Sigmoid colon (tissue), 7 donors: ENCODE measurements at regions of chr12 and their contacts with region 1.

Region 1: DNA sequence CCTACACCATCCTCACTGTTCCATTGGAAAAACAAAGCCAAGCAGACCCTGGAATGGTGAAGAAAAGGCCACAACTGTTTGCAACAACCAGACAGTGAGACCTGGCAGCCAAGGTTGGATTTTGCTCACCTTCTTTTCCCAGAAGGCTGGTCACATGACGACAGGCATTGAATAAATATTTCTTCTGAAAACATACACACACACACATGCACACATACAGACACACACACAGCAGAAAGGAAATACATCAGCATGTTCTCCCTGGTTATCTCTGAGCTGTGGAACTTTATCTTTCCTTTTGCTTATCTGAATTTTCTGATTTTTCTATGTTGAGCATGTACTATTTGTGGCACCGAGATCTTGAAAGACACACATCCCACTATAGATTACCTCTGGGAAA is 38.0 kb upstream of the CCDC60 start:
- DNase-seq: no peak
- H3K4me3 ChIP-seq: no peak overlapping the region
- H3K27ac ChIP-seq: no peak overlapping the region
- H3K4me1 ChIP-seq: peaks cover 0 to 16% (median 15%) of the 10 kb centered on the region in 4 donors
- H3K27me3 ChIP-seq: no peaks in the 10 kb centered on the region
- CTCF ChIP-seq: no peak
- EP300 ChIP-seq: no peak
- POLR2A ChIP-seq: no peak

Region 2: DNA sequence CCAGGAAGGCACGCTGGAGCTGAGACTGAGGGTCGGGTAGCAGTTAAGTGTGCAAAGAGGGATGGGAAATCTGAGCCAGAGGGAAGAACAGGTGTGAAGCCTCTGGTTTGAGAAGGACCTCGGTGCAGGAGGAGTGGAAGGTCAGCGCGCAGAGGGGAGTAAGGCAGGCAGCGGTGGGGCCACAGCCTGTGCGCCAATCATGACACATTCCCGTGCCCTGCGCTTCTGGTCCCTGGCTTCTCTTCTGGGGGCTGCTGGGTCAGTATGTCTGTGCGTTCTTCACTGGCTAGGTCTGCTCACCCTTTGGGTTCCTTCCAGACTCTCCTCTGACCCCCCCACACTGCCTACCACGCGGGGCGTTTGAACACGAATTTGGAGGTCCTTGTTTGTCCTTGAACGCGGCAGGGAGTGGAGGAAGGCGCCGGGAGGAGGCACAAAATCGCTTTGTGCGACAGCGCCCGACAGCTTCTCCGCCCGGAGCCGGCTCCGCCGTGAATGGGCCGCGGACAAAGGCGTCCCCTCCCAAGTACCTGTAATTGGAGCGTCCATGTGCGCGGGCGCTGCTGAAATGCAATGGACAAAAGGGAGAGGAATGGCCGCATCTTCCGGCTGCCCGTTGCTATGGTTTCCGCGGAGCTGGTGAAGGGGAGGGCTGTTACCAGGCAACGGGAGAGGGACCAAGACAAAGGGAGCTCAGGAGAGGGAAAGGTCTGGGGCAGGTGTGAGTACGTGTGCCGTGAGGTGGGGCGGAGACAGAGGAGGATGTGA is 522.4 kb before region 1 on chr12:
- intact Hi-C with region 1: no loop called
- DNase-seq: no peak
- H3K4me3 ChIP-seq: no peak overlapping the region
- H3K27ac ChIP-seq: no peak overlapping the region
- H3K4me1 ChIP-seq: peaks cover 0 to 4% (median 0%) of the 10 kb centered on the region in 4 donors
- H3K27me3 ChIP-seq: peaks cover 3 to 27% (median 23%) of the 10 kb centered on the region in 3 donors
- CTCF ChIP-seq: no peak
- EP300 ChIP-seq: no peak
- POLR2A ChIP-seq: no peak

Region 3: DNA sequence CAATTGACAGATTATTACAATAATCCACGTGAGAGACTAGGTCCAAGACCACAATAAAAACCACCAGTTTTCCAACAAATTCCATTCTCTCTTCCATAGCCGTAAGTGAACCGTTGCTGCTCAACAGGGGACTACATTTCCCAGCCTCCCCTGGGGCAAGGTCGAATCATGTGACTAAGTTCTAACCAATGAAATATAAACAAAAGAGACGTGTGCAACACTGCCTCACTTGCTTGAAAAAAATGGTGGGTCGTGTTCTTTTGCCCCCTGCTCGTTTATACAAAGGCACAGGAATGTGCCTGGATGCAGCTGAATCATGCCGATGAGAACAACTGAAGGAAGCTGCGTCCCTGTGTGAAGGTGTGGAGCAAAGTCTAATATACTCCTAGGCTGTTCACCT is 66.7 kb before region 1 on chr12:
- intact Hi-C with region 1: loop called (anchors 5 kb)
- DNase-seq: no peak
- H3K4me3 ChIP-seq: peak overlapping the region in 2 of 4 donors; percentile 14 to 26
- H3K27ac ChIP-seq: no peak overlapping the region
- H3K4me1 ChIP-seq: no peaks in the 10 kb centered on the region
- H3K27me3 ChIP-seq: no peaks in the 10 kb centered on the region
- CTCF ChIP-seq: no peak
- EP300 ChIP-seq: no peak
- POLR2A ChIP-seq: no peak

Region 4: GRCh38 chr12:119258149-119258548 is 38.4 kb before region 1 on chr12:
- intact Hi-C with region 1: no loop called
- DNase-seq: no peak
- H3K4me3 ChIP-seq: no peak overlapping the region
- H3K27ac ChIP-seq: no peak overlapping the region
- H3K4me1 ChIP-seq: no peaks in the 10 kb centered on the region
- H3K27me3 ChIP-seq: no peaks in the 10 kb centered on the region
- CTCF ChIP-seq: no peak
- EP300 ChIP-seq: no peak
- POLR2A ChIP-seq: no peak

Region 5: GRCh38 chr12:119667577-119668323 is 371.2 kb after region 1 on chr12 and contains the start of gene PRKAB1:
- intact Hi-C with region 1: no loop called
- DNase-seq: peak; percentile 98
- H3K4me3 ChIP-seq: peak within 1 kb of the TSS; percentile 78 to 88 (median 82)
- H3K27ac ChIP-seq: peak within 1 kb of the TSS; percentile 89 to 96 (median 94)
- H3K4me1 ChIP-seq: peaks cover 0 to 26% (median 20%) of the 10 kb centered on the region in 4 donors
- H3K27me3 ChIP-seq: no peaks in the 10 kb centered on the region
- CTCF ChIP-seq: peak; percentile 51 to 90 (median 78)
- EP300 ChIP-seq: no peak
- POLR2A ChIP-seq: peak; percentile 50 to 89
- total RNA-seq, gene PRKAB1: 18.5 to 44.3 (median 19.7) TPM